ENCODE measurements at regions of chr9 and their contacts with region 1.

Region 1: GRCh38 chr9:130866474-130866965 is 30.1 kb downstream of the QRFP start:
- DNase-seq: peak; percentile 85 to 86
- H3K4me3 ChIP-seq: no peak overlapping the region
- H3K27ac ChIP-seq: no peak overlapping the region
- H3K4me1 ChIP-seq: no peaks in the 10 kb centered on the region
- H3K27me3 ChIP-seq: no peaks in the 10 kb centered on the region
- CTCF ChIP-seq: peak; percentile 96

Region 2: GRCh38 chr9:130701056-130702022 is 165.2 kb before region 1 on chr9:
- CTCF ChIA-PET with region 1: interaction called, 19 read pairs
- POLR2A ChIA-PET with region 1: no interaction called
- intact Hi-C with region 1: loop called (anchors 1 kb)
- DNase-seq: peak in 1 of 2 experiments; percentile 71
- H3K4me3 ChIP-seq: no peak overlapping the region
- H3K27ac ChIP-seq: no peak overlapping the region
- H3K4me1 ChIP-seq: no peaks in the 10 kb centered on the region
- H3K27me3 ChIP-seq: no peaks in the 10 kb centered on the region
- CTCF ChIP-seq: peak; percentile 94

Region 3: GRCh38 chr9:130770679-130771442 is 95.7 kb before region 1 on chr9:
- CTCF ChIA-PET with region 1: interaction called, 9 read pairs
- POLR2A ChIA-PET with region 1: no interaction called
- intact Hi-C with region 1: loop called (anchors 1 kb)
- DNase-seq: peak; percentile 7 to 46
- H3K4me3 ChIP-seq: no peak overlapping the region
- H3K27ac ChIP-seq: no peak overlapping the region
- H3K4me1 ChIP-seq: no peaks in the 10 kb centered on the region
- H3K27me3 ChIP-seq: no peaks in the 10 kb centered on the region
- CTCF ChIP-seq: peak; percentile 80

Region 4: DNA sequence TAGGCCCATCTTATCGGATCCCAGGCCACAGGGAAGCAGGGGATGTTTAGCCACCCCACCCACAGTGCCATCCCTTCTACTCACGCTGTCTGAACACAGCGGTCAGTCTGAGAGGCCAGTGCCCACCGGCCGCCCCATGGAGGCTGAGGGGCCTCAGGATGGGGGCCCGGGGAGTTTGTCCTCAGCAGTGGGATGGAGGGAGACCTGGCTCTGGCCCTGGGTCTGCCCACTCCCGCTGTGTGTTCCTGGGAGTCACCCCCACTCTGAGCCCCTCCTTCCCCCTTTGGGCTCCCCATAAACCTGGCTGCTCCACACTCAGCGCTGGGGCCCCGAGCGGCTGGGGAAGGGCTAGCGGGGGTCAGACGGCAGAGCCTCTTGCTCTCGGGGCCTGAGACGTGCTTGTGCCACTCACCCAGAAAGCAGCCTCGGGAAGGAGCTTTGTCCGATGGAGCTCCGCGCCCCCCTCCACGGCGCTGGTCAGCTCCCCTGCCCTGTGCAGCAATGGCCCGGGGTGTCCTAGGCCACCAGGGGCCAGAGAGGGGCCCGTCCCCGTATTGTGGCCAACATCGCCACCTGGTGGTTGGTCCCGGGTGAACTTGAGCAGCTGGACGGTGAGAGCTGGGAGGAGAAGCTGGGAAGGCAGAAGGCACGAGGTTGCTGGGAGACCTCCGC is 131.5 kb after region 1 on chr9:
- CTCF ChIA-PET with region 1: interaction called, 15 read pairs
- POLR2A ChIA-PET with region 1: no interaction called
- intact Hi-C with region 1: loop called (anchors 1 kb)
- DNase-seq: peak; percentile 52 to 84
- H3K4me3 ChIP-seq: no peak overlapping the region
- H3K27ac ChIP-seq: no peak overlapping the region
- H3K4me1 ChIP-seq: no peaks in the 10 kb centered on the region
- H3K27me3 ChIP-seq: peaks cover 29% of the 10 kb centered on the region
- CTCF ChIP-seq: peak; percentile 88

Region 5: GRCh38 chr9:131046581-131047202 is 180.2 kb after region 1 on chr9:
- CTCF ChIA-PET with region 1: interaction called, 25 read pairs
- POLR2A ChIA-PET with region 1: no interaction called
- intact Hi-C with region 1: loop called (anchors 1 kb)
- DNase-seq: peak in 1 of 2 experiments; percentile 72
- H3K4me3 ChIP-seq: peak overlapping the region; percentile 2; the same call in 1 of the 2 replicates
- H3K27ac ChIP-seq: no peak overlapping the region
- H3K4me1 ChIP-seq: no peaks in the 10 kb centered on the region
- H3K27me3 ChIP-seq: peaks cover 10% of the 10 kb centered on the region; the same call in 1 of the 2 replicates
- CTCF ChIP-seq: peak; percentile 94

Measured in PC-9 (cell line).